AG04450 (cell line): ENCODE measurements at regions of chr5 and their contacts with region 1.

Region 1: DNA sequence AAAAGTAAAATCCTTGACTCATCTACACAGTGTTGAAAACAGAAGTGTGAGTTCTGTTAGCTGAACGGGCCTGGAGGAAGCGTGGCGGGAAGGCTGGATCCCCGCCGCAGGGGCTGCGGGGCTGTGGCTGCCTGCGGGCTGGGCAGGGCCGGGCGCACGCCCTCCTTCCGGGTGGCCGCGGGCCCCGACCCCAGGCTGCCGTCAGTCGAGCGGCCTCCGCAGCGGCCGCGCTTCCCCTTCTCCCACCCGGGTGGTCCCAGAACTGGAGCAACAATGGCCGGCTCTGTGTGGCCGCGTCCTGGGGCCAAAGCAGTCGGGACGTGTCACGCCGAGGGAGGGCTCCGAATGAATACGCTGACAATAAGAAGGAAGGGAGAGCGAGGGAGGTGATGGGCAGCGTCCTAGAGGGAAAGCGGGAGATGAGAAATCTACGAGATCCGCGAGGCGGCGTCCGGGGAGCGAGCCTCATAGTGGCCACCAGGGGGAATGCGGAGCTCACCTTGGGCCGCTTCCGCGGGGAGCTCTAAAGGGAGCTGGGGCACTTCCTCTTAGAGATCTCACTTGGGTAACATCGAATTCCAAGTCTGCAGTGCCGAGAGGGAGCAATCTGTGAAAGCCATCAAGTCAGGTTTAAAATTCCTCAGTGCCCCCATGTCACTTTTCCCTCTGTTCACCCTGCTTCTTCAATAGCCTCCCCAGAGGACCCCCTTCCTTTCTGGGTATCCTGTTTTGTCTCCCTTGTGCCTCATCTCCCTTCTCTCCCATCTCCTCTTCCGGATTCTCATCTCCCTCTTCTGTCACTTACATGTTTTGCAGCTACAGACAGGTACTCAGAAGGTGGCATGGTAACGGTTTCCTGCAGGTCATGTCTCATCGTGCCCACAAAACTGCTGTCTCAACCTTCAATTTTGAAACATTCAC is 83.9 kb downstream of the SLC1A3 start:
- DNase-seq: peak; percentile 33
- H3K4me3 ChIP-seq: peak overlapping the region; percentile 64
- H3K27ac ChIP-seq: no peak overlapping the region
- H3K27me3 ChIP-seq: no peaks in the 10 kb centered on the region
- CTCF ChIP-seq: peak; percentile 97

Region 2: DNA sequence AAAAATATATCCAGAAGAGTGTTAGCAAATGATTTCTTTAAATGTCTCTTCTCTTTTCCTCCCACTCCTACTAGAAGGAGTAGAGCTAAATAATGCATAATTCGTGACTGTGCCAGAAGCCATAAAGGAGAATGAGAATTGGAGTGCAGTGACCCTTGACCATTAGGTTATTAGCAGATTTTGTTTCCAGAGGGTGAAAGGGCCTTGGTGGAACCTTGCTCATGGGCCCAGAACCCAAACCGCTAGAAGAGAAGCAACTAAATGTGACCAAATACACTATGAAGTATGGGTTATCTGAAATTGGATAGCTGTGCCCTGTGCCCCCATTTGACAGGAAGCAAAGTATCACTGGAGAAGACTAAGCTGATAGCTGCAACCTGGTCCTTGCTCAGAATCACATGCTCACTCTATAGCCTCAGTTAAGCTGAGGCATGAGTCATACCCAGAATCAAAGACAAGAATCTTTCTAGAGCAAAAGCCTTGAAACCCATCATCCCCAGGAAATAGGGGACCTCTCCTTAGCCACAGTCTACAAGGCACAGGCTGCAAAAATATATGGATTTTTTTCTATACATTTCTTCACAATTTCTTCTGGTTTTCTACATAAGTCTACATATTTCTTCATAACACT is 788.1 kb before region 1 on chr5:
- CTCF ChIA-PET with region 1: no interaction called
- POLR2A ChIA-PET with region 1: no interaction called
- DNase-seq: no peak
- H3K4me3 ChIP-seq: no peak overlapping the region
- H3K27ac ChIP-seq: no peak overlapping the region
- H3K27me3 ChIP-seq: no peaks in the 10 kb centered on the region
- CTCF ChIP-seq: no peak

Region 3: DNA sequence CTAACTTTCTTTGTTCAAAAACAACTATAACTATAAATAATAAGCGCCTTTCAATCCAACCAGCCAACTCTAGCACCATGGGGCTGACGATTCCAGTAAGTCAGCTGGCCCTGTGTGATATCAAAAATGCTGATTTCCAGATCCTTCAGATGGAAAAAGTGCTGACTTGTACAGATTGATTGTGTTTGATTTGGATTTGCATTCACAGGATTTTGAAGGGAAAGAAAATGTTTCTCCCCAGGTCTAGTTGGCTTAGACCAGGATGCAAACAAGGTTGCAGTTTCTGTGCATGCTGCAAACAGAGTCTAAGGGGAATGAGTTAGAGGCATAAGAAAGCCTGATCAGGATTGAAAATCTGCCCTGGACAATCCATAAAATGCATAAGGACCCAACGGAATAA is 15.0 kb before region 1 on chr5:
- CTCF ChIA-PET with region 1: interaction called, 15 read pairs
- POLR2A ChIA-PET with region 1: no interaction called
- DNase-seq: no peak
- H3K4me3 ChIP-seq: no peak overlapping the region
- H3K27ac ChIP-seq: no peak overlapping the region
- H3K27me3 ChIP-seq: no peaks in the 10 kb centered on the region
- CTCF ChIP-seq: no peak

Region 4: DNA sequence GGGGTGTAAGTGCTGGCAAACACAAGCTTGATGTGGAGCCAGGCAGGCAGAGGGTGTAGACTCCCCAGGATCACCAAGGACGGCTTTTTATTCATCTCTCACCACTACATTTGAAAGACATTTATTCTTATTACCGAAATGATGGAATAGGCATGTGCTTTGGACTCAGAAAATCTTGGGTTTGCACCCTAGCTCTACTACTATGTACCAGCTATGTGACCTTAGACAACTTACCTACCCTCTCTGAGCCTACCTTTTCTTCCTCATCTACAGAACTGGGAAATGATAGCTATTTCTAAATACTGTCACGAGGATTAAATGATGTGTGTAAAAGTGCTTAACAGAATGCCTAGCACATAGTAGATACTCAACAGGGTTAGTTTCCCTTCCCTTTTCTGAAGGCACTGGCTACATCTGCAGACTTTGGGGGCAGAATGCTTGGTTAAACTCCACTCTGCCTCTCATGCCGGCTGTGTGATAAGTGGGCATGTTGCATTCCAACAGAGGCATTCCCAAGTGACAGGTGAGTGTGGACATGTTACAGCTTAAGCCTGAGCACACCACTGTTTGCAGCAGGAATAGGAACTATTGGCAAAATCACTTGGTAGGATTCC is 10.9 kb after region 1 on chr5:
- CTCF ChIA-PET with region 1: interaction called, 32 read pairs
- POLR2A ChIA-PET with region 1: no interaction called
- DNase-seq: no peak
- H3K4me3 ChIP-seq: no peak overlapping the region
- H3K27ac ChIP-seq: no peak overlapping the region
- H3K27me3 ChIP-seq: peaks cover 14% of the 10 kb centered on the region
- CTCF ChIP-seq: no peak

Region 5: DNA sequence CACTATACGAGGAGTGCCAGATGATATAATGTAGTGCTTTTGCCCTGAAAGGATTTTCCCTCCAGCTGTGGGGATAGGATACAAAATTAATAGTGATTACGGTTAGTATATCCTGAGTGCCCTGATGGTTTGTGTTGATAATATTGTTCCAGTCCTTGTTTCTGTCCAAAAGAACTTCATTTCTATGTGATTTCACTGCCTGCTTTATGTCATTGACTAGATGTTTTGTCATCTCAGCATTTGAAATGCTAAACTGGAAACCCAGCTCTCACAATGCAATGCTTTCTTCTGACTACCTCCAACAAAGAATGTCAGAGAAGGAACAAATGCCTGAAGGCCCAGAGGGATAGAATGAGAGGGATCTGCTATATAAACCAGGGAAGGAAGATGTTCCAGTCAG is 364.1 kb after region 1 on chr5:
- CTCF ChIA-PET with region 1: no interaction called
- POLR2A ChIA-PET with region 1: no interaction called
- DNase-seq: no peak
- H3K4me3 ChIP-seq: no peak overlapping the region
- H3K27ac ChIP-seq: no peak overlapping the region
- H3K27me3 ChIP-seq: no peaks in the 10 kb centered on the region
- CTCF ChIP-seq: no peak